ENCODE measurements at regions of chr6 and their contacts with region 1.

Region 1: DNA sequence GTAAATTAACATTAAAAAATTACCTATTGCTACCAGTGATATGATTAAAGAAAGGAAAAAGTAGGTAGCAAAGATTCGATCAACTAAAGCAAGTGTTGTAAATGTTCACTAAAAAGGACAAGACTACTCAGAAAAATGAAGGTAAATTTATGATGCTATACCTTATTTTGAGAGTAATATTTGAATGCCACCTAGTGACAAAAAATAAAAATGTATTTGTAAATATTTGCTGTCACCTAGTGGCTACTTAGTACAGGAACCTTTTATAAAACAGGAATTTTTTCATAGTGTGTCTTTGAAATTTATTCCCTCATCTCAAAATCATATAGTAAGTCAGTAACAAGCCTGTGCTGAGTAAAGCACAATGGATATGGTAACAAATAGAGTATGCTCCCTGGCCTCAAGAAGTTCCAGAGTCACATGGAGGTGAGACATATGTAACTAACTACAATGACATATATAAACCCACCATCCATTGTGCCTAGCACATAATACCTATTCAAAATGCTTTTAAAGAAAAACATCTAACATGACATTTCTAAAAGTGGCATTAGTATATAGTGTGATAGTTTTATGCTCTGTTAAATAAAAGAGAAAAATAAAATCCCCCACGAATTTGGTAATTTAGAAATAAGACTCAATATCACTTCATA is 193.1 kb upstream of the SIM1 start:
- DNase-seq: no peak
- H3K4me3 Mint-ChIP-seq: no peak overlapping the region
- H3K27ac Mint-ChIP-seq: no peak overlapping the region
- H3K4me1 Mint-ChIP-seq: peaks cover 11% of the 10 kb centered on the region
- H3K27me3 Mint-ChIP-seq: no peaks in the 10 kb centered on the region
- CTCF ChIP-seq: peak; percentile 46

Region 2: DNA sequence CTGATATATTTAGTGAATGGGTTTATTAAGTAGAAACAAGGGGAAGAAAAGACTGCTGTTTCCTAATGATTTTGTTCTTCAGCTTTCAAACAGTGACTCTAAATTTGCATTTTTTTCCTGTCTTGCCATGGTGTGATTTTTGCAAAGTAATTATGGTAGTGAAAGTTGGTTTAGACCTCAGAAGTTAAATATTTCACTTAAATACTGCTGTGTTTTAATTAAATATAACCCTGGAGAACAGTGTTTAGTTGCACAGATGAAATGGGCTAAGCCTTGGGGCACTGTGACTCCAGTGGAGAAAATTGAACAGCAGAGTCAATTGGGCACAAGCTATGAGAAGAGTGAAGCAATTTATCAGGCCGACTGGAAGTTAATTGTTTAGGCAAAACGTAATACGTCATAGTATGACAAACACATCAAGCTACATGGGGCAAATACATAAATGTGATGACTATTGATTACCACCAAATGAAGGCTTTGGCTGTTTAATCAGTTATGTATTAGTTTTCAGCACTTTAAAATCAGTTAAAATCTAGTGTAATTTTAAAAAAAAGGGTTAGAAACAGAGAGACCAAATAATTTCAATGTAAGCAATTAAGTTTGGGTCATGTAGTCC is 552.6 kb before region 1 on chr6:
- CTCF ChIA-PET with region 1: interaction called, 9 read pairs
- intact Hi-C with region 1: loop called (anchors 2 kb)
- DNase-seq: no peak
- H3K4me3 Mint-ChIP-seq: no peak overlapping the region
- H3K27ac Mint-ChIP-seq: no peak overlapping the region
- H3K4me1 Mint-ChIP-seq: peaks cover 8% of the 10 kb centered on the region
- H3K27me3 Mint-ChIP-seq: no peaks in the 10 kb centered on the region
- CTCF ChIP-seq: no peak

Region 3: GRCh38 chr6:100322886-100323285 is 334.9 kb before region 1 on chr6:
- CTCF ChIA-PET with region 1: no interaction called
- intact Hi-C with region 1: loop called (anchors 5 kb)
- DNase-seq: no peak
- H3K4me3 Mint-ChIP-seq: no peak overlapping the region
- H3K27ac Mint-ChIP-seq: no peak overlapping the region
- H3K4me1 Mint-ChIP-seq: no peaks in the 10 kb centered on the region
- H3K27me3 Mint-ChIP-seq: no peaks in the 10 kb centered on the region
- CTCF ChIP-seq: no peak

Region 4: GRCh38 chr6:100381111-100381510 is 276.7 kb before region 1 on chr6:
- CTCF ChIA-PET with region 1: no interaction called
- intact Hi-C with region 1: no loop called
- DNase-seq: no peak
- H3K4me3 Mint-ChIP-seq: no peak overlapping the region
- H3K27ac Mint-ChIP-seq: no peak overlapping the region
- H3K4me1 Mint-ChIP-seq: no peaks in the 10 kb centered on the region
- H3K27me3 Mint-ChIP-seq: no peaks in the 10 kb centered on the region
- CTCF ChIP-seq: no peak

Region 5: DNA sequence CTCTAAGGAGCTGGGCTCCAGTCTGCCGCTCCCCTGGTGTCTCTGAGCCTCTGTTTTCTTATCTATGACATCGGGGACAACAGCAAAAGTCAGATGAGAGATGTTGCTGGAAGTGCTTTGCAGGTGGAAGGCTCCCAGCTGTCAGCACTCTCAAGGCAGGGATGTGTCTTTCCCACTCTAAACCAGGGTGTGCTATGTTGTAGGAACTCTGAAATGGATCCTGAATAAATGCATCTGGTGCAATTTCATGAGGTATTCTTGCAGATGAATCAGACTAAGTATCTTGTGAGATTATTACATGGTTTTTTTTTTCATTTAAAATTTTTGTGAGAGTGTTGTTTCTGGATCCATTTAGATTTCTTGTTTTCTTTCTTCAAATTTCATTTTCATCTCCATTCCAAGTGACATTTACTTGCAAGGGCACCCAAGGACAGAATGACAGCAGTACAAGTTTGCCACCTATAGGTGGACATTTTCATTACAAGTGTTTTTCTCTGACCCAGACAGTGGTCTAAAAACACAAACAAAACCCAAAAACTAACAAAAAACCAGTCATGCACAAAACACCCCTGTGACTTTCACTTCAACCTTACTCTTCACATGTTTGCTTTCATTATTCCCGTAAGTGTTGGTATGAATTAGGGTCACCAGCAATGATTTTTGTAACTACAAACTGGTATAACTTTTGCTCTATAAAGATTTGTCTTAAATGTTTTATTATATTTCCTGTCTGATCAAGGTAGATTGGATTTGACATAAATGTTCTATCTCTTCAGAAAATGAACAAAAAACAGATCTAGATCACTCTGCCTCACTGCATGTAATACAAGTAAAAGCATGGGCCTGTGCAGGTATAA is 178.4 kb before region 1 on chr6:
- CTCF ChIA-PET with region 1: no interaction called
- intact Hi-C with region 1: loop called (anchors 5 kb)
- DNase-seq: peak; percentile 30
- H3K4me3 Mint-ChIP-seq: no peak overlapping the region
- H3K27ac Mint-ChIP-seq: no peak overlapping the region
- H3K4me1 Mint-ChIP-seq: peaks cover 40% of the 10 kb centered on the region
- H3K27me3 Mint-ChIP-seq: no peaks in the 10 kb centered on the region
- CTCF ChIP-seq: peak; percentile 42

Region 6: GRCh38 chr6:100504786-100505737 is 152.7 kb before region 1 on chr6:
- CTCF ChIA-PET with region 1: no interaction called
- intact Hi-C with region 1: loop called (anchors 10 kb)
- DNase-seq: peak; percentile 64
- H3K4me3 Mint-ChIP-seq: no peak overlapping the region
- H3K27ac Mint-ChIP-seq: no peak overlapping the region
- H3K4me1 Mint-ChIP-seq: peaks cover 12% of the 10 kb centered on the region
- H3K27me3 Mint-ChIP-seq: no peaks in the 10 kb centered on the region
- CTCF ChIP-seq: no peak

Region 7: GRCh38 chr6:100595456-100595855 is 62.3 kb before region 1 on chr6:
- CTCF ChIA-PET with region 1: no interaction called
- intact Hi-C with region 1: loop called (anchors 5 kb)
- DNase-seq: no peak
- H3K4me3 Mint-ChIP-seq: no peak overlapping the region
- H3K27ac Mint-ChIP-seq: no peak overlapping the region
- H3K4me1 Mint-ChIP-seq: no peaks in the 10 kb centered on the region
- H3K27me3 Mint-ChIP-seq: no peaks in the 10 kb centered on the region
- CTCF ChIP-seq: no peak

Region 8: GRCh38 chr6:100719883-100720682 is 62.3 kb after region 1 on chr6:
- CTCF ChIA-PET with region 1: no interaction called
- intact Hi-C with region 1: no loop called
- DNase-seq: no peak
- H3K4me3 Mint-ChIP-seq: peak overlapping the region; percentile 50
- H3K27ac Mint-ChIP-seq: peak overlapping the region; percentile 66
- H3K4me1 Mint-ChIP-seq: peaks cover 12% of the 10 kb centered on the region
- H3K27me3 Mint-ChIP-seq: no peaks in the 10 kb centered on the region
- CTCF ChIP-seq: no peak

Region 9: GRCh38 chr6:101150226-101150625 is 492.4 kb after region 1 on chr6:
- CTCF ChIA-PET with region 1: no interaction called
- intact Hi-C with region 1: no loop called
- DNase-seq: no peak
- H3K4me3 Mint-ChIP-seq: no peak overlapping the region
- H3K27ac Mint-ChIP-seq: no peak overlapping the region
- H3K4me1 Mint-ChIP-seq: no peaks in the 10 kb centered on the region
- H3K27me3 Mint-ChIP-seq: no peaks in the 10 kb centered on the region
- CTCF ChIP-seq: no peak

Measured in Calu3 (cell line).